Psoas muscle (tissue), 8 donors: ENCODE measurements at regions of chr5 and their contacts with region 1.

Region 1: GRCh38 chr5:157917899-157918809 is 59.2 kb upstream of the CLINT1 start:
- DNase-seq: peak; percentile 60 to 72
- ATAC-seq: peak in 3 of 4 donors; percentile 45 to 55 (median 51)
- H3K4me3 ChIP-seq: no peak overlapping the region
- H3K27ac ChIP-seq: no peak overlapping the region
- H3K4me1 ChIP-seq: peaks cover 11% of the 10 kb centered on the region
- H3K27me3 ChIP-seq: no peaks in the 10 kb centered on the region
- CTCF ChIP-seq: peak; percentile 33

Region 2: DNA sequence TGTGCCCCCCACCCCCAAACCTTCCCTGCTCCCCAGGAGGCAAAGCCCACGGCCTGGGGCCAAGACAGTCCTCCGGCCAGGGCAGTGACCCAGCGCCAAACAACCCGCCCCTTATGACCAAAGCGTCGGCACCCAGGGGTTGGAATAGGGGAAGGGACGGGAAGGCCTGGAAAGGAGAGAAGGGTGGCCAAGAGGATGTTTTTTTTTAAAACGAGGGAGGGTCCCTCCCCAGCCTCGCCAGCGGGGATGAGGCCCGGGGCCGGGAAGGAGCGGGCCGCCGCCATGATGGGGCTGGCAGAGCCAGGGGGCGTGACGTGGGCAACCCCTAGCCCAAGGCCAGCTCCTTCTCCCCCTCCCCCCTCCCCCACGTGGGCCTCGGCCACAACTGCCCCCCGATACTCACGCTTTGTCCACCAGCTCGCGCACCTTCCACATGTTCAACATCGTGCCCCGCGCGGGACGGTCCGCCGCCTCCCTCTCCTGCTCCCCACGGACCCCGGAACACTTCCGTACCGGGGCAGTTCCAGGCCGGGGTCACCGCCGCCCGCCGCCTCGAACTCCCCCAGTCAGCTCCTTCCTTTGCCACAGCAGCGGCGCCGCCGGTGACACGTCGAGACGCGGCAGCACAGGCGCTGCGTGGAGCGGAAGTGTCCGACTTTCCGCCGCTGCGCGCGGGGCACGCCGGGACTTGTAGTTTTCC is 59.5 kb before region 1 on chr5 and contains the start of gene CLINT1:
- intact Hi-C with region 1: loop called in 1 of 2 experiments (anchors 5 kb)
- DNase-seq: peak; percentile 94 to 96
- ATAC-seq: peak; percentile 98 to 100 (median 99)
- H3K4me3 ChIP-seq: peak within 1 kb of the TSS; percentile 99
- H3K27ac ChIP-seq: peak within 1 kb of the TSS; percentile 98
- H3K4me1 ChIP-seq: peaks cover 32% of the 10 kb centered on the region
- H3K27me3 ChIP-seq: no peaks in the 10 kb centered on the region
- CTCF ChIP-seq: no peak
- total RNA-seq, gene CLINT1: 50.8 to 83.3 (median 68.4) TPM